ENCODE measurements at regions of chr5 and their contacts with region 1.

Region 1: GRCh38 chr5:140351609-140352334 is 5.4 kb upstream of the HBEGF start:
- DNase-seq: no peak
- H3K4me3 ChIP-seq: no peak overlapping the region
- H3K27ac ChIP-seq: no peak overlapping the region
- H3K4me1 ChIP-seq: peaks cover 20 to 39% (median 21%) of the 10 kb centered on the region in 3 donors
- H3K27me3 ChIP-seq: no peaks in the 10 kb centered on the region
- CTCF ChIP-seq: peak; percentile 72 to 92 (median 90)
- POLR2A ChIP-seq: no peak

Region 2: DNA sequence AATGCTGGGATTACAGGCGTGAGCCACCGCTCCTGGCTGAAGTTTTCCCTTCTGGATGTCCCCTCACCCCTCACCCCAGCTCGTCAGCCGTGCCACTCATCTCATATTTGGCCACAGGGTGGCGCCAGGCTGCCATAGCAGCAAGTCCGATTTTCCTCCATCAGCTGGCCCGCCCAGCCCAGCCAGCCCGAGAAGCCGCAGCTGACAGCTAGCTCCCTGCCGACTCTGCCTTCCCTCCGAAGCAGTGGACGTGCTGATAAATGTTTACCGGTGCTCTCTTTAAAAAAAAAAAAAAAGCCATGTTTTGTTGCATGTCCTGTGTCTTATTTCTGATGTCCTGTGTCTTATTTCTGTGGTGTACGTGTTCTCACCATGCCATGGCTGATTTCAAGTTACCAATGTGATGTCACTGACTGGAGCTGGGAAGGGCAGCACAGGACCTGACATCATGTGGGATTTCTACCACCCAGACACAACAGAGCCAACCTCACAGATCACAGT is 107.2 kb before region 1 on chr5:
- intact Hi-C with region 1: loop called (anchors 2 kb)
- DNase-seq: peak; percentile 33
- H3K4me3 ChIP-seq: no peak overlapping the region
- H3K27ac ChIP-seq: peak overlapping the region in 1 of 4 donors; percentile 4
- H3K4me1 ChIP-seq: peaks cover 29 to 66% (median 46%) of the 10 kb centered on the region in 3 donors
- H3K27me3 ChIP-seq: no peaks in the 10 kb centered on the region
- CTCF ChIP-seq: peak; percentile 80 to 95 (median 92)
- POLR2A ChIP-seq: no peak